ENCODE measurements at regions of chr13 and their contacts with region 1.

Region 1: GRCh38 chr13:51583875-51584730 is at the start of gene WDFY2:
- DNase-seq: peak; percentile 99 to 100
- H3K4me3 ChIP-seq: peak within 1 kb of the TSS; percentile 70
- H3K4me3 Mint-ChIP-seq: peak within 1 kb of the TSS; percentile 75
- H3K27ac Mint-ChIP-seq: peak within 1 kb of the TSS; percentile 38
- H3K4me1 ChIP-seq: peaks cover 21% of the 10 kb centered on the region
- H3K4me1 Mint-ChIP-seq: peaks cover 7% of the 10 kb centered on the region
- H3K27me3 ChIP-seq: no peaks in the 10 kb centered on the region
- H3K27me3 Mint-ChIP-seq: peaks cover under 1% of the 10 kb centered on the region
- CTCF ChIP-seq: peak in 1 of 2 experiments; percentile 24
- total RNA-seq, gene WDFY2: 6.3 and 9.2 TPM in 2 replicates

Region 2: DNA sequence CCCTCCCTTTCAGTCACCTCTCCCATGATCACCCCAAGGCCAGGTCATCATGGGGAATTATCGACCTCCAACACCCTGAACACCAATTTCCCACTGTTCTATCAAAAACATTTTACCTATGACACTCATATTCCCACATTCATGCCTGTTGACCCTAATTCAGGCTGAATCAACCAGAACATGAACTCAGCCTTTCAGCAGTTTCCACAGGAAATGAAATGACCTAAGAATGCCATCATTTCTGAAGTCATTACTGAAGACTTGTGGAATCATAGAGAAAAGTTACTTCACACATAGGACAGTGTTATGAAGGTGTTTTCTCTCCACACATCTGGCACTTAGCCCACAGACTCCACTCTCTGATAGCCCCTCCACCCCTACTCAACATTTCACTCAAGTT is 391.8 kb before region 1 on chr13:
- CTCF ChIA-PET with region 1: no interaction called
- POLR2A ChIA-PET with region 1: no interaction called
- intact Hi-C with region 1: no loop called
- DNase-seq: no peak
- H3K4me3 ChIP-seq: no peak overlapping the region
- H3K4me3 Mint-ChIP-seq: no peak overlapping the region
- H3K27ac Mint-ChIP-seq: no peak overlapping the region
- H3K4me1 ChIP-seq: no peaks in the 10 kb centered on the region
- H3K4me1 Mint-ChIP-seq: no peaks in the 10 kb centered on the region
- H3K27me3 ChIP-seq: no peaks in the 10 kb centered on the region
- H3K27me3 Mint-ChIP-seq: peaks cover 6% of the 10 kb centered on the region
- CTCF ChIP-seq: no peak

Region 3: DNA sequence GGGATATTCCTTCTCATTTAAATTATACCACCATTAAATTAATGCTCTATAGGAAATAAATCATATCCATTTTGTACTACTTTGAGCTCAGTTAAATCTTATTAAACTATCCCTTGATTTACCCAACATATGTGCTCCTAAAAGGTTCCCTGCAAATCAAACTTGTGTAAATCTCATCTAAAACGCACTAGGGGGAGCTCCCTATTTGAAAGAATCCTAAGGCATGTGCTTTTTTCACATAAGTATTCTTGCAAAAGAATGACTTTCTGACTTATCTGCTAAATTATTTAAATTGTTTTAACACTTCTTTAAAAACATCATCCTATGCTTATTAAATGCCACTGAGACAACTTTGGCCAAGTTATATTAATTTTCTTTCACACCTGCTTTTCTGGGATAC is 139.2 kb before region 1 on chr13:
- CTCF ChIA-PET with region 1: no interaction called
- POLR2A ChIA-PET with region 1: interaction called, 10 read pairs
- intact Hi-C with region 1: no loop called
- DNase-seq: no peak
- H3K4me3 ChIP-seq: no peak overlapping the region
- H3K4me3 Mint-ChIP-seq: no peak overlapping the region
- H3K27ac Mint-ChIP-seq: no peak overlapping the region
- H3K4me1 ChIP-seq: no peaks in the 10 kb centered on the region
- H3K4me1 Mint-ChIP-seq: no peaks in the 10 kb centered on the region
- H3K27me3 ChIP-seq: no peaks in the 10 kb centered on the region
- H3K27me3 Mint-ChIP-seq: no peaks in the 10 kb centered on the region
- CTCF ChIP-seq: peak; percentile 26 to 41

Region 4: DNA sequence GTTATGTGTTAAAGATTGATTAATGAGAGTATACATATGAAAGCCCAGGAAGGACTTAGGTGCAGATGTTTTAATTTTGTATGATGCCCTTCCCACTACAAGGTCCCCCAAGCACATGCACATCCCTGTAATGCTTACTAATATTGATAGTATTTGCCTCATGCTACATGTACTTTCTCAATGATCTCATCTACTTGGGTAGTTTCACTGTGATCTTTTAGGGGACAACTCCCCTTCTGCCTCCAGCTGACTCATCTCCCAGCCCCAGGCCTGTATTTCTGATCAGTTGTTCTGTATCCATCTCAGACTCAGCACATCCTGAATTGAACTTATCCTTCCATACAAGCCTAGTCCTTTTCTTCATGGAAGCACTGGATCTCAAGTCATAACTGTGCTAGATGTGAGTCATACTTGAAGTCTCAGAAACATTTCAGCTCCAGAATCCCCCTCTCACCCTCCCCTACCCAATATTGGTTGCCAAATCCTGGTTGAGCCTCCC is 81.9 kb before region 1 on chr13:
- CTCF ChIA-PET with region 1: no interaction called
- POLR2A ChIA-PET with region 1: no interaction called
- intact Hi-C with region 1: no loop called
- DNase-seq: no peak
- H3K4me3 ChIP-seq: no peak overlapping the region
- H3K4me3 Mint-ChIP-seq: no peak overlapping the region
- H3K27ac Mint-ChIP-seq: no peak overlapping the region
- H3K4me1 ChIP-seq: no peaks in the 10 kb centered on the region
- H3K4me1 Mint-ChIP-seq: no peaks in the 10 kb centered on the region
- H3K27me3 ChIP-seq: no peaks in the 10 kb centered on the region
- H3K27me3 Mint-ChIP-seq: peaks cover 5% of the 10 kb centered on the region
- CTCF ChIP-seq: no peak

Region 5: DNA sequence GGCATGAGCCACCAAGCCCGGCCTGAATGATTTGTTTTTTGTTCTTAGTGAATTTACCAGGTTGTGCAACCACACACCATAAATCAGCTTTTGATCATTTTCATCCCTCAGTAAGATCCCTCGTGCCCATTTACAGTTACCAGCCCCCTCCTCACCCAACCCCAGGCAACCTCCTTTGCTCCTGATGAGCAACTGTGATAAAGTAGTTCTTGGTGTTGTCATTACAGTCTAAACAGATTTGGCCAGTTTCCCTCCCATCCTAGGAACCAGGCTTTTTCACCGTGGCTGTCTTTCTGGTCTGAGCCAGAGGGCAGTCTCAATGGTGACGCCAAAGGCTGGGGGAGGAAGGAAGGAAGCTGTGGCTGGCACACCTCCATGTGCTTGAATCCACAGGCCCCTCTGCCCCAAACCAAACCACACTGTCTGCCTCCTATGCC is 61.0 kb before region 1 on chr13:
- CTCF ChIA-PET with region 1: no interaction called
- POLR2A ChIA-PET with region 1: no interaction called
- intact Hi-C with region 1: loop called (anchors 5 kb)
- DNase-seq: no peak
- H3K4me3 ChIP-seq: no peak overlapping the region
- H3K4me3 Mint-ChIP-seq: no peak overlapping the region
- H3K27ac Mint-ChIP-seq: no peak overlapping the region
- H3K4me1 ChIP-seq: peaks cover 13% of the 10 kb centered on the region
- H3K4me1 Mint-ChIP-seq: no peaks in the 10 kb centered on the region
- H3K27me3 ChIP-seq: no peaks in the 10 kb centered on the region
- H3K27me3 Mint-ChIP-seq: no peaks in the 10 kb centered on the region
- CTCF ChIP-seq: no peak

Region 6: DNA sequence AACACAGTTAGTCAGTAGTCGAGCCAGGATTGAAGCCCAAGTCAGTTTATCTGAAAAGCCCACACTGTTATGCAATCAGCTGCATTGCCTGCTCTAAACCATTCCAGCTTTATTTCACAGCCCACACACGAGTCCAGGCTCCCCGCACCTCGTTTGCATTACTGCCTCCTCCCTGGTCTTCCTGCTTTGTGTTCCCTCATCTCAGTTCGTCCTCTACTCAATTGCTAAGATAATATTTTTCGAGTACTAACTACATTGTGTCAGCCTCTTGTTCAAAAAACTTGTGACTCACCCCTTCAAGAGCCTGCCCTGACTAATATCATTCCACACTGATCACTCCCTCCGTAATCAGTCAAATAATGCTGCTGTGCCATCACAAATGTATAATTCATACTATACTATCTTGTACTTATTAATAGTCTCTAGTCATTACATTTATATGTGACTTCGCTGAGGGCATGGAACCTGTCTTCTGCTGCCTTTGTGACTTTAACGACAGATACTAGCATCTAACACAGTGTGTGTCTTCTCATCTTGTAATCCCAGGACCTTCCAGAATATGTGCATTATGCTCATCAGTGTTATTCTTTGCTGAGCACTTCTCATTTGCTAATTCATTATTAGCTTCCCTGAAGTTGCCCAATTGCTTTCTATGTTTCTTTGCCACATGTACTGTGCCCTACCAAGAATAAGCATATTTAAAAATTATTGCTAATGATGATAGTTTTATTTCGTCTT is 26.1 kb before region 1 on chr13:
- CTCF ChIA-PET with region 1: no interaction called
- POLR2A ChIA-PET with region 1: no interaction called
- intact Hi-C with region 1: loop called (anchors 2 kb)
- DNase-seq: no peak
- H3K4me3 ChIP-seq: no peak overlapping the region
- H3K4me3 Mint-ChIP-seq: no peak overlapping the region
- H3K27ac Mint-ChIP-seq: no peak overlapping the region
- H3K4me1 ChIP-seq: no peaks in the 10 kb centered on the region
- H3K4me1 Mint-ChIP-seq: peaks cover 7% of the 10 kb centered on the region
- H3K27me3 ChIP-seq: no peaks in the 10 kb centered on the region
- H3K27me3 Mint-ChIP-seq: peaks cover 6% of the 10 kb centered on the region
- CTCF ChIP-seq: no peak

Region 7: DNA sequence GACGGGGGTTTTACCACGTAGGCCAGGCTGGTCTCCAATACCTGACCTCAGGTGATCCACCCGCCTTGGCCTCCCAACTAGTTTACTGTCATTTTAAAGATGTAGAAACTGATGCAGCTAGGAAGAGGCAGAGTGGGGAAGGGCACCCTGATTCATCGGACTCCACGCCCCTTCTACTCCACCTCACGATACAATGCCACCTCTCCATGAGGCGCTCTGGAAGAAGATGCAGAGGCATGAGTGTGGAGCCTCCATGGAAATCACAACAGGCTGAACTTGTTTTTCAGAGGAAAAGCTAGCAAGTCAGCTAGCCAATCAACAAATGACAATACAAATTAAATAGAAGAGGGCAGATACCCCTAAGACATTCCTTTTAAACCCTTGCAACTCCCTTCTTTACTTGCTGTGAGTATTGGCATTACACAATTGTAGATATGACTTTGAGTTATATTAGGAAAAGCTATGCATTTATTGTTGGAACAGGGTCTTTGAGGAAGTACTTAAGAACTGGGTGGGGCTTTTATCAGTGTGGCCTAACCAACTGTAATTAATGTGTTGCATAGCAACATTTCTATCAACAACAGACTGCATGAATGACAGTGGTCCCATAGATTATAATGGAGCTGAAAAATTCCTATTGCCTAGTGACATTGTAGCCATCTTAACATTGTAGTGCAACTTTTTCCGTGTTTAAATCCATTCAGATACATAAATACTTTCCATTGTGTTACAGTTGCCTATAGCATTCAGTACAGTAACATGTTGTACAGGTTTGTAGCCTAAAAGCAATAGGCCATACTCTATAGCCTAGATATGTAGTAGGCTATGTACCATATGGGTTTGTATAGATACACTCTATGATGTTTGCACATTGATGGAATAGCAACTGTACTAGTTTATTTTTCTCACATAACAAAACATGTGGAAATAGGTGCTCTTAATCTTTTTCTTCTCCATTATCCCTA is 17.8 kb after region 1 on chr13:
- CTCF ChIA-PET with region 1: no interaction called
- POLR2A ChIA-PET with region 1: no interaction called
- intact Hi-C with region 1: no loop called
- DNase-seq: no peak
- H3K4me3 ChIP-seq: no peak overlapping the region
- H3K4me3 Mint-ChIP-seq: no peak overlapping the region
- H3K27ac Mint-ChIP-seq: no peak overlapping the region
- H3K4me1 ChIP-seq: peaks cover 3% of the 10 kb centered on the region; the same call in 1 of the 2 replicates
- H3K4me1 Mint-ChIP-seq: no peaks in the 10 kb centered on the region
- H3K27me3 ChIP-seq: no peaks in the 10 kb centered on the region
- H3K27me3 Mint-ChIP-seq: no peaks in the 10 kb centered on the region
- CTCF ChIP-seq: no peak

Region 8: GRCh38 chr13:51619614-51620013 is 35.5 kb after region 1 on chr13:
- CTCF ChIA-PET with region 1: no interaction called
- POLR2A ChIA-PET with region 1: no interaction called
- intact Hi-C with region 1: no loop called
- DNase-seq: no peak
- H3K4me3 ChIP-seq: no peak overlapping the region
- H3K4me3 Mint-ChIP-seq: no peak overlapping the region
- H3K27ac Mint-ChIP-seq: no peak overlapping the region
- H3K4me1 ChIP-seq: no peaks in the 10 kb centered on the region
- H3K4me1 Mint-ChIP-seq: no peaks in the 10 kb centered on the region
- H3K27me3 ChIP-seq: no peaks in the 10 kb centered on the region
- H3K27me3 Mint-ChIP-seq: no peaks in the 10 kb centered on the region
- CTCF ChIP-seq: no peak

Region 9: GRCh38 chr13:51636349-51636890 is 52.3 kb after region 1 on chr13:
- CTCF ChIA-PET with region 1: no interaction called
- POLR2A ChIA-PET with region 1: no interaction called
- intact Hi-C with region 1: loop called (anchors 1 kb)
- DNase-seq: peak in 1 of 2 experiments; percentile 31
- H3K4me3 ChIP-seq: no peak overlapping the region
- H3K4me3 Mint-ChIP-seq: no peak overlapping the region
- H3K27ac Mint-ChIP-seq: peak overlapping the region; percentile 2
- H3K4me1 ChIP-seq: peaks cover 36% of the 10 kb centered on the region
- H3K4me1 Mint-ChIP-seq: peaks cover 33% of the 10 kb centered on the region
- H3K27me3 ChIP-seq: no peaks in the 10 kb centered on the region
- H3K27me3 Mint-ChIP-seq: no peaks in the 10 kb centered on the region
- CTCF ChIP-seq: no peak

Region 10: GRCh38 chr13:51803422-51804294 is 219.6 kb after region 1 on chr13 and contains the start of gene DHRS12:
- CTCF ChIA-PET with region 1: no interaction called
- POLR2A ChIA-PET with region 1: no interaction called
- intact Hi-C with region 1: loop called (anchors 1 kb)
- DNase-seq: peak; percentile 92 to 94
- H3K4me3 ChIP-seq: peak within 1 kb of the TSS; percentile 69
- H3K4me3 Mint-ChIP-seq: peak within 1 kb of the TSS; percentile 89
- H3K27ac Mint-ChIP-seq: peak within 1 kb of the TSS; percentile 94
- H3K4me1 ChIP-seq: peaks cover 8% of the 10 kb centered on the region; the same call in 1 of the 2 replicates
- H3K4me1 Mint-ChIP-seq: peaks cover 9% of the 10 kb centered on the region
- H3K27me3 ChIP-seq: no peaks in the 10 kb centered on the region
- H3K27me3 Mint-ChIP-seq: no peaks in the 10 kb centered on the region
- CTCF ChIP-seq: no peak
- total RNA-seq, gene DHRS12: 12.5 and 14.1 TPM in 2 replicates